T-cell (primary cell): ENCODE measurements at regions of chr10 and their contacts with region 1.

Region 1: GRCh38 chr10:102880256-102880655 is 11.0 kb downstream of the AS3MT start:
- DNase-seq: no peak
- ATAC-seq: no peak
- H3K4me3 ChIP-seq: no peak overlapping the region
- H3K4me3 Mint-ChIP-seq: no peak overlapping the region
- H3K27ac ChIP-seq: no peak overlapping the region
- H3K27ac Mint-ChIP-seq: no peak overlapping the region
- H3K4me1 ChIP-seq: no peaks in the 10 kb centered on the region
- H3K4me1 Mint-ChIP-seq: no peaks in the 10 kb centered on the region
- H3K27me3 ChIP-seq: no peaks in the 10 kb centered on the region
- H3K27me3 Mint-ChIP-seq: no peaks in the 10 kb centered on the region

Region 2: GRCh38 chr10:102660888-102661657 is 219.2 kb before region 1 on chr10:
- CTCF ChIA-PET with region 1: no interaction called
- POLR2A ChIA-PET with region 1: no interaction called
- DNase-seq: peak in 27 of 35 experiments; percentile 27 to 71 (median 47)
- ATAC-seq: peak; percentile 78 to 89 (median 82)
- H3K4me3 ChIP-seq: peak overlapping the region; percentile 5 to 29
- H3K4me3 Mint-ChIP-seq: peak overlapping the region; percentile 28 to 68 (median 41)
- H3K27ac ChIP-seq: peak overlapping the region; percentile 51
- H3K27ac Mint-ChIP-seq: peak overlapping the region; percentile 85 to 87
- H3K4me1 ChIP-seq: peaks cover 17 to 51% of the 10 kb centered on the region in 2 experiments
- H3K4me1 Mint-ChIP-seq: peaks cover 39 to 45% (median 40%) of the 10 kb centered on the region in 3 donors
- H3K27me3 ChIP-seq: no peaks in the 10 kb centered on the region
- H3K27me3 Mint-ChIP-seq: no peaks in the 10 kb centered on the region

Region 3: GRCh38 chr10:103605359-103606095 is 725.3 kb after region 1 on chr10:
- CTCF ChIA-PET with region 1: interaction called in 1 of 2 experiments, 10 read pairs
- POLR2A ChIA-PET with region 1: no interaction called
- DNase-seq: peak in 25 of 35 experiments; percentile 10 to 65 (median 27)
- ATAC-seq: no peak
- H3K4me3 ChIP-seq: no peak overlapping the region
- H3K4me3 Mint-ChIP-seq: no peak overlapping the region
- H3K27ac ChIP-seq: no peak overlapping the region
- H3K27ac Mint-ChIP-seq: no peak overlapping the region
- H3K4me1 ChIP-seq: no peaks in the 10 kb centered on the region
- H3K4me1 Mint-ChIP-seq: no peaks in the 10 kb centered on the region
- H3K27me3 ChIP-seq: peaks cover 0 to 3% of the 10 kb centered on the region in 2 experiments
- H3K27me3 Mint-ChIP-seq: no peaks in the 10 kb centered on the region